ENCODE measurements at regions of chr22 and their contacts with region 1.

Region 1: DNA sequence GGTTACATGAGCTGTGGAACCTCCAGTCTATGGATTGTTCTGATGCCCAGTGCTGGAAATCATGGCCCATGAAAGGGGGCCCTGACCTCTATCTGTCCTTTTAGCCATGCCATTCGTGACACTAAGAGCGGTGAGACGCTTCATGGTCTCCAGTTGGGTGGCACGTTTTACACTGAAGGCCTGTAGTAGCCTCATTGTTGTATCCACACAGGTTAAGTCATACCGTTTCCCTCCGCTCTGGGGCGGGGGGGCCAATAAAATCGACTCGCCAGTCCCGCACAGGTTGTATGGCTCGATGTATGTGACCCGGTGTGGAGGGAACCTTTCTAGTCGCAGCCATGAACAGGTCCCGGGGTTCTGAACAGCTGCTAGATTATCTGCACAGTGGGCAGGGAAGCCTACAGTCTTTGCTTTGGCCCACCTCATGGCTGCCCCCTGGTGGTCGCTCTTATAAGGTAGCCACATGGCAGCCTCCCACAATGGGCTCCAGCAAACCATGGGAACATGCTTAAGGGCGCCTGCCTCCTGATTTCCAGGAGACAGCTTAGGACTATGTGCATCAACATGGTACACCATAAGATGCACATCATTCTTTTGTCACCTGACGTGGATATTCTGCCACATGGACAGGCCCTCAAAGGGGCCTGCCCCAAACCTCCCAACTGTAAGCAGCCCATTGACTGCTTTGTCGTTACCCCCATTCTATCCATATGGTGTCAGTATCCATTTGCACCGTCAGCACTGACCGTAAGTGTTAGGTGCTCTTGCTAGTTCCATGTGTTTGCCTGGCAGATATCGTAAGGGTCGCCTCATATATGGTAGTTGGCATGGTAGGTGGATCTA is 19.7 kb upstream of the APOL3 start:
- DNase-seq: no peak
- ATAC-seq: peak; percentile 100
- H3K4me3 ChIP-seq: no peak overlapping the region
- H3K27ac ChIP-seq: no peak overlapping the region
- H3K4me1 ChIP-seq: no peaks in the 10 kb centered on the region
- H3K27me3 ChIP-seq: no peaks in the 10 kb centered on the region
- CTCF ChIP-seq: peak; percentile 90 to 91 (median 91)
- EP300 ChIP-seq: no peak
- POLR2A ChIP-seq: no peak
- RAD21 ChIP-seq: peak; percentile 86

Region 2: GRCh38 chr22:34356481-34356880 is 1823.8 kb before region 1 on chr22:
- CTCF ChIA-PET with region 1: no interaction called
- POLR2A ChIA-PET with region 1: no interaction called
- RAD21 ChIA-PET with region 1: no interaction called
- SMC1A ChIA-PET with region 1: no interaction called
- in situ Hi-C with region 1: no loop called
- intact Hi-C with region 1: no loop called
- DNase-seq: no peak
- ATAC-seq: no peak
- H3K4me3 ChIP-seq: no peak overlapping the region
- H3K27ac ChIP-seq: no peak overlapping the region
- H3K4me1 ChIP-seq: no peaks in the 10 kb centered on the region
- H3K27me3 ChIP-seq: no peaks in the 10 kb centered on the region
- CTCF ChIP-seq: no peak
- EP300 ChIP-seq: no peak
- POLR2A ChIP-seq: no peak
- RAD21 ChIP-seq: no peak

Region 3: GRCh38 chr22:36123673-36124630 is 56.3 kb before region 1 on chr22:
- CTCF ChIA-PET with region 1: interaction called, 10 read pairs
- POLR2A ChIA-PET with region 1: no interaction called
- RAD21 ChIA-PET with region 1: interaction called, 3 read pairs
- SMC1A ChIA-PET with region 1: interaction called, 3 read pairs
- in situ Hi-C with region 1: no loop called
- intact Hi-C with region 1: no loop called
- DNase-seq: peak; percentile 52
- ATAC-seq: peak; percentile 100
- H3K4me3 ChIP-seq: peak overlapping the region; percentile 26; the same call in 1 of the 2 replicates
- H3K27ac ChIP-seq: no peak overlapping the region
- H3K4me1 ChIP-seq: no peaks in the 10 kb centered on the region
- H3K27me3 ChIP-seq: no peaks in the 10 kb centered on the region
- CTCF ChIP-seq: peak; percentile 98 to 99 (median 99); a peak in 5 of 6 replicates
- EP300 ChIP-seq: no peak
- POLR2A ChIP-seq: 0 out of 2 replicates have a peak, but pooled peaks have one; percentile 30
- RAD21 ChIP-seq: peak; percentile 96

Region 4: DNA sequence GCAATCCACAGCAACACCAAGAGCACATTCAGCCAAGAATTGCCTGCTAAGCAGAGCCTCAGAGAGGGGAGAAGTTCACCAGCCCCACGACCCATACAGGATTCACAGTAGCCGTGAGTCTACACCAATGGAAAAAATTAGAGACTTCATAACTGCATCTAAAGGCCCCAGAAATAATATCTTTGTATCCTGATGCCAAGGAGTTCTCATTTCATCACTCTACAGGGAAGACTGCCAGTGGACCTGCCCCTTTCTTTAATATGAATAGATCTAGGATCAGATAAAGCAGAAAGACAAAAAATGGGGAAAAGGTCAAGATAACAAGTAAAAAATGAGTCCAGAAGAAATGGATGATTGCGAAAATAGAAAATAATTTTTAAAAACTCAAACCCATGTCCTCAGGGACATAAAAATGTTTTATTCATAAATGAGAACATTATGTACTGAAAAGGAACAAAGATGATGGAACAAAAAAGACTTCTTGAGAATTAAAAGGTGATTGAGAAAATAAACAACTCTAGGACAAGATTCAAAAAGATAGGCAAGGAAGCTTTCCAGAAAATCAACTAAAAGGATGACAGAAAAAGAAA is 29.2 kb before region 1 on chr22:
- CTCF ChIA-PET with region 1: interaction called, 150 read pairs
- POLR2A ChIA-PET with region 1: no interaction called
- RAD21 ChIA-PET with region 1: interaction called, 12 read pairs
- SMC1A ChIA-PET with region 1: interaction called, 154 read pairs
- in situ Hi-C with region 1: no loop called
- intact Hi-C with region 1: no loop called
- DNase-seq: no peak
- ATAC-seq: no peak
- H3K4me3 ChIP-seq: no peak overlapping the region
- H3K27ac ChIP-seq: no peak overlapping the region
- H3K4me1 ChIP-seq: peaks cover 1% of the 10 kb centered on the region; the same call in 1 of the 2 replicates
- H3K27me3 ChIP-seq: no peaks in the 10 kb centered on the region
- CTCF ChIP-seq: no peak
- EP300 ChIP-seq: no peak
- POLR2A ChIP-seq: no peak
- RAD21 ChIP-seq: no peak

Region 5: GRCh38 chr22:36194971-36195370 is 14.7 kb after region 1 on chr22:
- CTCF ChIA-PET with region 1: interaction called, 8 read pairs
- POLR2A ChIA-PET with region 1: no interaction called
- RAD21 ChIA-PET with region 1: interaction called, 3 read pairs
- SMC1A ChIA-PET with region 1: interaction called, 10 read pairs
- in situ Hi-C with region 1: no loop called
- intact Hi-C with region 1: no loop called
- DNase-seq: no peak
- ATAC-seq: peak; percentile 91
- H3K4me3 ChIP-seq: no peak overlapping the region
- H3K27ac ChIP-seq: no peak overlapping the region
- H3K4me1 ChIP-seq: peaks cover 12% of the 10 kb centered on the region
- H3K27me3 ChIP-seq: no peaks in the 10 kb centered on the region
- CTCF ChIP-seq: peak; percentile 68 to 79 (median 78)
- EP300 ChIP-seq: no peak
- POLR2A ChIP-seq: no peak
- RAD21 ChIP-seq: peak; percentile 72

Region 6: DNA sequence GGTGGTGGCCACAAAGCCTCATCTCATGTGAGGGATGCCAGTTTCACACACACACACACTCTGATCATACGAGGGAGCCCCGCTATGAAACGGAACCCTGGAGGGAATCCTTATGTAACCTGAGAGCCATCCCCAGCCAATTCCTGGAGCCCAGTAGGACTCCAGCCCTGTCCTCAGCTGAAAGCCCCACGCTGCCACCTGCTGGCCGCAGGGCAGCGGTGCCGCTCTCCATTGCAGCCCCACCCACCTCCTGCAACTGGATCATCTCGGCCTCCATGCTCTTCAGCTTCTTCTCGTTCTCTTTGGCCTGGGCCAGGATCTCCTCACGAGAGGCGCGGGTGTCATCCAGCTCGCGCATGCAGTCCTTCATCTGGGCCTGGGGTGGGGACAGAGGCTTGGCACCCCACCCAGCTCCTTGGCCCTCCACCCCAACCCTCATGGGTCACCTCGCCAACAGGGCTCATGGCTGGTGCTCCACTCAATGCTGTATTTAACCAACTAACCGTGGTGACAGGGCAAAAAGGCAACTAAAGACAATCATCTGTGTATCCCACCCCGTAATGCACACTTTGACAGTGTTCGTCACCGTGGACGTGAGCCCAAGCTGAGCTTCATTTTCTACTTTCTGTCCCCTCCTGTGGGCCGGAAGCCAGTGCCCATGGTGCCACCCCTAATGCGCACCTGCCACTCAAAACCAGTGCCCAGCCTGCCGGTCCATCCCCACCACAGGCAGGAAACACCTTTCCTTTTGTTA is 106.4 kb after region 1 on chr22:
- CTCF ChIA-PET with region 1: interaction called, 14 read pairs
- POLR2A ChIA-PET with region 1: no interaction called
- RAD21 ChIA-PET with region 1: no interaction called
- SMC1A ChIA-PET with region 1: no interaction called
- in situ Hi-C with region 1: no loop called
- intact Hi-C with region 1: no loop called
- DNase-seq: no peak
- ATAC-seq: peak; percentile 93
- H3K4me3 ChIP-seq: no peak overlapping the region
- H3K27ac ChIP-seq: no peak overlapping the region
- H3K4me1 ChIP-seq: no peaks in the 10 kb centered on the region
- H3K27me3 ChIP-seq: no peaks in the 10 kb centered on the region
- CTCF ChIP-seq: peak; percentile 79 to 92 (median 86)
- EP300 ChIP-seq: no peak
- POLR2A ChIP-seq: peak; percentile 48
- RAD21 ChIP-seq: peak; percentile 55

Measured in GM12878 (cell line).